ENCODE measurements at regions of chr10 and their contacts with region 1.

Region 1: DNA sequence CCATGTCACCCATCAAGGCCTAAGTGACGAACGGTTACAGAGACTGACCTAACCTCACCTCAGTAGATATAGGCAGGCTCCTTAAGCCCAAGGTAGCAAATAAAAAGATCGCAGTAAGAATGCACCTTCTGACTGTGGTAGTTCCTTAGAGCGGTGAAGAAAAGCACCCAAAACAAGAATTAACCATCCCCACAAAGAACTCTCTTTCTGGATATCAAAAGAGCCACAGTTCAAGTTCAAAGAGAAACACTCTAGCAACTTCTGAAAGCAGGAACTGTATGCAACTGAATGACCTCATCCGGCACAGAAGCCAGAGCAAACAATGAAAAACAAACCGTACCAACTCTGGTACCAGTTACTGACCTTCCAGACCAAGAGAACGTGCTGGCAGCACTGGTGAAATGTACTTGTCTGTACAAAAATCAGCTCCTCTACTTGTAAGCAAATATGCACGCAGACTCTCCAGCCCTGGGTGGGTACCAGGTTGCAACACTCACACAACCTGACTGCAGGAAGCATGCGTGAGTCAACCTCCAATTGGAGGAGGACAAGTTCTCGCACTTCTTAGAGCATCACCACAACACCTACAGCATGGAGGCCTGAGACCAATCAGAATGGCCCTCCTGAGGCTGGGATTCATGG is 202.7 kb downstream of the FAM107B start:
- DNase-seq: peak; percentile 62
- ATAC-seq: peak; percentile 76
- H3K4me3 Mint-ChIP-seq: peak overlapping the region; percentile 87
- H3K27ac Mint-ChIP-seq: peak overlapping the region; percentile 97
- H3K4me1 Mint-ChIP-seq: peaks cover 66% of the 10 kb centered on the region
- H3K27me3 Mint-ChIP-seq: no peaks in the 10 kb centered on the region

Region 2: DNA sequence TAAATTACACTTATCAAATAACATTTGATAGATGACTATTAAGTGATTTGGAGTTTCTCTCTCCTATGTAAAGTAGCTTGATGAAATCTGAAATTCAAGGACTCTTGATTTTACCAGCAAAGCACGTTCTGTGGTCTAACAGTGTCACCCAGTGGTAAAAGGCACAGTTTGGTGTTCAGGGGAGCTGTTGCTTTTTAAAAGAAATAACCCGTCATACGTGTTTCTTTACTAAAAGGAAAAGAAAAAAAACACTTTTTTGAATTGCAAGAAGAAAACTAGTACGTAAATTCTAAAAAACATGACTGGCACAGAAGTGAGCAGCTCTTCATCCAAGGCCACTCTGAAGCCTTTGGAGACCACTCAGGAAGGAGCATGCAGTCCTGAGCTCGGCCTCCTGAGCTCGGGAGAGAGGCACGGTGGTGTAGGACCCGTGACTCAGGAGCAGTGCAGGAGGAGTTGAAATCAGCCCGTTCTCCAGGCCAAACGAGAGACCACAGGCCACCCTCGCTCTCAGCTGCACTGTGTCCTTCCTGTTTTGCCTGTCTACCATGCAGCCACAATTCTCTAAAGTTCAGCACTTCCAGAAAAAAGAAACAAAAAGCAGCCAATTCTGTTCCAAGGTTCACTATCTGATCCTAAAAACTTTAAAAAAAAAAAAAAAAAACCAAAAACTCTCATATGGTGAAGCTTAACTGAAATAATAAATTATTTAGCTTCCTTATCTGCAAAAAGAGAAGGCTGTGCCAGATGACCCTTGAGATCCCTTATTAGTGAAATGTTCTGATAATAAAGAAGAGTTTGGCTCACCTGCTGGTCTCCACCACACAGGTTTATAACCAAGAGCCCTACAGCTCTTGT is 28.7 kb before region 1 on chr10:
- POLR2A ChIA-PET with region 1: interaction called, 11 read pairs
- DNase-seq: no peak
- ATAC-seq: peak; percentile 66
- H3K4me3 Mint-ChIP-seq: peak overlapping the region; percentile 67
- H3K27ac Mint-ChIP-seq: peak overlapping the region; percentile 82
- H3K4me1 Mint-ChIP-seq: peaks cover 63% of the 10 kb centered on the region
- H3K27me3 Mint-ChIP-seq: no peaks in the 10 kb centered on the region

Region 3: GRCh38 chr10:14553448-14553847 is 18.5 kb before region 1 on chr10:
- POLR2A ChIA-PET with region 1: interaction called, 11 read pairs
- DNase-seq: no peak
- ATAC-seq: peak; percentile 59
- H3K4me3 Mint-ChIP-seq: peak overlapping the region; percentile 49
- H3K27ac Mint-ChIP-seq: peak overlapping the region; percentile 63
- H3K4me1 Mint-ChIP-seq: peaks cover 72% of the 10 kb centered on the region
- H3K27me3 Mint-ChIP-seq: no peaks in the 10 kb centered on the region

Region 4: DNA sequence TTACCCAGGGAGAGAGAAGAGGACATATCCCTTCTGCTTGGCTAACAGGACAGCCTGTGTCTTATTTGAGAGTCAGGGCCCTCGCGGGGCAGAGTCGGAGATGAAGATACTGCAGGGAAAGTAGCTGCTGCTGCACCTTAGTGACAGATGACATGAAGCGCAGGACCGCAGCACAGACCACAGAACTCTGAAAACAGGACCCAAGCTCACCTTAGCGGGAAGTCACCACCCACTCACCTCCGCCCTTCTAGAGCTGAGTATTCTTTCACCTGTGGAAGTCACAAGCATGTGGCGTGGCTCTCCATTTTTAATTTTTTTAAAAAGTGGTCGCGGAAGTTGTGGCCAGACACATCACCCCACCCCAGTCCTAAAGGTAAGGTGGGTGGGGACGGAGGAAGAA is 11.3 kb after region 1 on chr10:
- POLR2A ChIA-PET with region 1: interaction called, 33 read pairs
- DNase-seq: peak; percentile 73
- ATAC-seq: peak; percentile 71
- H3K4me3 Mint-ChIP-seq: peak overlapping the region; percentile 78
- H3K27ac Mint-ChIP-seq: peak overlapping the region; percentile 94
- H3K4me1 Mint-ChIP-seq: peaks cover 80% of the 10 kb centered on the region
- H3K27me3 Mint-ChIP-seq: no peaks in the 10 kb centered on the region

Region 5: GRCh38 chr10:14588084-14588937 is 16.3 kb after region 1 on chr10:
- POLR2A ChIA-PET with region 1: interaction called, 33 read pairs
- DNase-seq: no peak
- ATAC-seq: peak; percentile 32
- H3K4me3 Mint-ChIP-seq: peak overlapping the region; percentile 72
- H3K27ac Mint-ChIP-seq: peak overlapping the region; percentile 94
- H3K4me1 Mint-ChIP-seq: peaks cover 80% of the 10 kb centered on the region
- H3K27me3 Mint-ChIP-seq: no peaks in the 10 kb centered on the region